Activated CD4-positive, alpha-beta memory T cell treated with anti-CD3 and anti-CD28 coated beads, Interleukin-2, amount 10 ng/mL, durations not matched to agents 7 days and 5 days (primary cell): ENCODE measurements at regions of chr2 and their contacts with region 1.

Region 1: GRCh38 chr2:165874445-165875039 is 79.0 kb downstream of the TTC21B start:
- DNase-seq: no peak
- H3K4me3 Mint-ChIP-seq: no peak overlapping the region
- H3K27ac Mint-ChIP-seq: no peak overlapping the region
- H3K4me1 Mint-ChIP-seq: peaks cover 25% of the 10 kb centered on the region
- H3K27me3 Mint-ChIP-seq: no peaks in the 10 kb centered on the region

Region 2: GRCh38 chr2:165401285-165401852 is 473.2 kb before region 1 on chr2:
- CTCF ChIA-PET with region 1: interaction called, 35 read pairs
- POLR2A ChIA-PET with region 1: no interaction called
- DNase-seq: no peak
- H3K4me3 Mint-ChIP-seq: no peak overlapping the region
- H3K27ac Mint-ChIP-seq: no peak overlapping the region
- H3K4me1 Mint-ChIP-seq: no peaks in the 10 kb centered on the region
- H3K27me3 Mint-ChIP-seq: peaks cover 19% of the 10 kb centered on the region

Region 3: GRCh38 chr2:165794536-165794928 is 80.0 kb before region 1 on chr2:
- CTCF ChIA-PET with region 1: interaction called, 24 read pairs
- POLR2A ChIA-PET with region 1: interaction called, 4 read pairs
- DNase-seq: peak; percentile 84
- H3K4me3 Mint-ChIP-seq: peak overlapping the region; percentile 93
- H3K27ac Mint-ChIP-seq: peak overlapping the region; percentile 95
- H3K4me1 Mint-ChIP-seq: peaks cover 42% of the 10 kb centered on the region
- H3K27me3 Mint-ChIP-seq: peaks cover 4% of the 10 kb centered on the region

Region 4: GRCh38 chr2:165863810-165864261 is 10.7 kb before region 1 on chr2:
- CTCF ChIA-PET with region 1: interaction called, 10 read pairs
- POLR2A ChIA-PET with region 1: no interaction called
- DNase-seq: peak; percentile 19
- H3K4me3 Mint-ChIP-seq: no peak overlapping the region
- H3K27ac Mint-ChIP-seq: no peak overlapping the region
- H3K4me1 Mint-ChIP-seq: no peaks in the 10 kb centered on the region
- H3K27me3 Mint-ChIP-seq: no peaks in the 10 kb centered on the region

Region 5: DNA sequence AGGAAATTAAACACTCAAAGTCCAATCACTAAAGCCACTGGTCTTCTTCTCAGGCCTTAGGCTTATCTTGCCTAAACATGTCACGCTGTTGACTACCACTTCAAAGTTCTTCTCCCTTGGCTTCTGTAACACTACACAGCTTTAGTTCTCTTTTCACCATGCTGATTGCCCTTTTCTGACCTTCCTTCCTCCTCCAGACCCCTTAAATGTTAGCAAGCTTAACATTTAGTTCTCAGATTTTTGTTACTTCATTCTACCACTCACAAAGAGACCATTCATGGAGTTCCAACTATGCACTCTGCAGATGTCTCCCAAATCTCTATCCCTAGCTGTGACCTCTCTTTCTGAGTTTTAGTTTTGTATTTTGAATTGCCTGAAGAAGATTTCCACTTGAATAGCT is 14.6 kb after region 1 on chr2:
- CTCF ChIA-PET with region 1: interaction called, 13 read pairs
- POLR2A ChIA-PET with region 1: no interaction called
- DNase-seq: no peak
- H3K4me3 Mint-ChIP-seq: no peak overlapping the region
- H3K27ac Mint-ChIP-seq: no peak overlapping the region
- H3K4me1 Mint-ChIP-seq: peaks cover 5% of the 10 kb centered on the region
- H3K27me3 Mint-ChIP-seq: no peaks in the 10 kb centered on the region

Region 6: GRCh38 chr2:165953655-165954606 is 79.4 kb after region 1 on chr2 and contains the start of gene TTC21B:
- CTCF ChIA-PET with region 1: interaction called, 10 read pairs
- POLR2A ChIA-PET with region 1: interaction called, 8 read pairs
- DNase-seq: peak; percentile 91
- H3K4me3 Mint-ChIP-seq: peak within 1 kb of the TSS; percentile 51
- H3K27ac Mint-ChIP-seq: no peak within 1 kb of the TSS
- H3K4me1 Mint-ChIP-seq: peaks cover 12% of the 10 kb centered on the region
- H3K27me3 Mint-ChIP-seq: no peaks in the 10 kb centered on the region
- total RNA-seq, gene TTC21B: 16.5 to 17.1 TPM

Region 7: DNA sequence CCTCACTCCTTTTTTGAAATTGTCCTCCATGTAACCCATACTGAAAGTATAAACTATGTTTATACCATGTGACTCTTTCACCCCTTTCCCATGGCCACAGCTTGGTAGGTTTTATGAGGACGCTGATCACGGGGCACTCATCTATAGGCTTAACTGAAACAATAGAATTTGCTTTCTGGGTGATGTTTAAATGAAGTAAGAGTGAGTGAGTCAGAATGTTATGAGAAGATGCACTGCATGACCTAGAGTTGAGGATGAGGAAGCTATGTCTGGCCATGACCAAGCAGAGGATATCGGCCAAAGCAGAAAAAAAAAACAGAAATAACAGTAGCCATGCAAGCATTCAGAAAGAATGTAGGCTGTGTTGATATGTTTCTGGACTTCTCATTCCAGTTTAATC is 218.3 kb after region 1 on chr2:
- CTCF ChIA-PET with region 1: no interaction called
- POLR2A ChIA-PET with region 1: no interaction called
- DNase-seq: no peak
- H3K4me3 Mint-ChIP-seq: no peak overlapping the region
- H3K27ac Mint-ChIP-seq: no peak overlapping the region
- H3K4me1 Mint-ChIP-seq: no peaks in the 10 kb centered on the region
- H3K27me3 Mint-ChIP-seq: peaks cover 1% of the 10 kb centered on the region